ENCODE measurements at regions of chr22 and their contacts with region 1.

Region 1: DNA sequence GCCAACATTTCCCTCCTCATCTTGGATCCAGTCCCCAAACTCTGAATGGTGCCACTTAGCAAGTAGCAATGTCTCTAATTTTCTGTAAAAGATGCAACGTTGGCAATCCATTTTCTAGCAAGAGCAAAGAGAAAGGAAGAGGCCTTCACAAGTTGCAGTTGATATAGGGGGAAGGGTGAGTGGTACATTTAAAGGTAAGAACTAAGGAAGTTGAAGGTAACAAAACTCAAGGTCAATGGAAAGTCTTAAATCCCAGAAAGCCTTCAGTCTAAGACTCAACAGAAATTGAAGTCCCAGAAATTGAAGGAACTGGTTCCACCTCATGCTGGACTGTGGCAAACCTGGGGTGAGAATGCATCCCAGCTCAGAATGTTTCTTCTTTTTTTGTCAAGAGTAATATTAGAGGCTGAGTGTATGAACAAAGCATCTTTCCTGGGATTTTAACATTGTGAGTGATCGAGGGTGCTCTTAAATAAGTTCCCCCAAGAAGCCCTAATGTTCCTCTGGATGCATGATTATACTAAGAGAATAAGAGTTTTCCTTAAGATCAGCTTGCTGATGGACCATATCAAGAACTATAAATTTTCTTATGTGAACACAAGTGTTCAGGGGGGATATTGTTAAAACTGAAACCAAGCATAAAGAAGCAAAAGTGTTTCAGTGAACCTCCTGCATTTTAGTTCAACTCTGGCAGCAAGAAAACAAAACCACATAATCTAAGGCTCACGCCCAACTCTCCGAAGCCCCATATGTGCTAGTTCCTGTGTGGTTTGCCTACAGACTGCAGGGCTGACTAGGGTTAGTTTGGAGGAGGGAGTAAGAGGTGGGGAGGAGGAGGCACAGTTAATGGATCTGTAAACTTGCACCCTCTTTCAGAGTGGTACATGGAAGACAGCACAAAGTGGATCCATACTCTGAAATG is at the start of gene GRAP2:
- DNase-seq: peak in 8 of 9 donors; percentile 52 to 90 (median 86)
- ATAC-seq: peak; percentile 98
- H3K4me3 ChIP-seq: peak within 1 kb of the TSS; percentile 71
- H3K4me3 Mint-ChIP-seq: peak within 1 kb of the TSS in 9 of 10 donors; percentile 95 to 99 (median 97)
- H3K27ac ChIP-seq: peak within 1 kb of the TSS; percentile 83
- H3K27ac Mint-ChIP-seq: peak within 1 kb of the TSS in 6 of 9 donors; percentile 86 to 99 (median 96)
- H3K4me1 ChIP-seq: peaks cover 23 to 27% of the 10 kb centered on the region in 2 donors
- H3K4me1 Mint-ChIP-seq: peaks cover 13 to 31% (median 22%) of the 10 kb centered on the region in 7 donors
- H3K27me3 ChIP-seq: no peaks in the 10 kb centered on the region
- H3K27me3 Mint-ChIP-seq: no peaks in the 10 kb centered on the region
- total RNA-seq, gene GRAP2: 108 to 156 (median 145) TPM

Region 2: DNA sequence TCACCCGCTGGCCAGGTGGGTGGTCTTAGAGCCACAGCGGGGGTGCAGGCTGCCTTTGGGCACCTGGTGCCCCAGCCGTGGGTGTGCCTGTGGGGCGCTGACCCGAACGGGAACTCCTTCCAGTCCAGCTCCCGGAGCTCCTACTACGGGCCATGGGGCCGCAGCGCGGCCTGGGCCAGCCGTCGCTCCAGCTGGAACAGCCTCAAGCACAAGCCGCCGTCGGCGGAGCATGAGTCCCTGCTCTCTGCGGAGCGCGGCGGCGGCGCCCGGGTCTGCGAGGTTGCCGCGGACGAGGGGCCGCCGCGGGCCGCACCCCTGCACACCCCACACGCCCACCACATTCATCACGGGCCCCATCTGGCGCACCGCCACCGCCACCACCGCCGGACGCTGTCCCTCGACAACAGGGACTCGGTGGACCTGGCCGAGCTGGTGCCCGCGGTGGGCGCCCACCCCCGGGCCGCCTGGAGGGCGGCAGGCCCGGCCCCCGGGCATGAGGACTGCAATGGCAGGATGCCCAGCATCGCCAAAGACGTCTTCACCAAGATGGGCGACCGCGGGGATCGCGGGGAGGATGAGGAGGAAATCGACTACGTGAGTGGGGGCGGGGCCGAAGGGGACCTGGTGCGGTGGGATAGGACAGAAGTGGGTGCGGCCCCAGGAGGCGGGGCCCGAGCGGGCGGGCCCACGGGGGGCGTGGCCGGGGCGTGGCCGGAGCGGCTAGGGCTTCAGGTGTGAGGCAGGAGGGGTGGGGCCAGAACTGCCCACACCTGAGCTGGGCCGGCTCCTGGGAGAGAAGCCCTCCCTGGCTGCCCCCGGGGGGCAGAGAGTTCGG is 238.5 kb before region 1 on chr22:
- CTCF ChIA-PET with region 1: no interaction called
- POLR2A ChIA-PET with region 1: no interaction called
- intact Hi-C with region 1: loop called in 1 of 2 experiments (anchors 2 kb)
- DNase-seq: peak; percentile 75 to 91 (median 88)
- ATAC-seq: peak; percentile 93
- H3K4me3 ChIP-seq: peak overlapping the region; percentile 73
- H3K4me3 Mint-ChIP-seq: peak overlapping the region; percentile 75 to 92 (median 86)
- H3K27ac ChIP-seq: peak overlapping the region; percentile 74
- H3K27ac Mint-ChIP-seq: peak overlapping the region in 7 of 9 donors; percentile 76 to 97 (median 91)
- H3K4me1 ChIP-seq: peaks cover 15 to 58% of the 10 kb centered on the region in 2 donors
- H3K4me1 Mint-ChIP-seq: peaks cover 31 to 77% (median 64%) of the 10 kb centered on the region in 7 donors
- H3K27me3 ChIP-seq: no peaks in the 10 kb centered on the region
- H3K27me3 Mint-ChIP-seq: peaks cover 0 to 25% (median 4%) of the 10 kb centered on the region in 5 donors

Region 3: DNA sequence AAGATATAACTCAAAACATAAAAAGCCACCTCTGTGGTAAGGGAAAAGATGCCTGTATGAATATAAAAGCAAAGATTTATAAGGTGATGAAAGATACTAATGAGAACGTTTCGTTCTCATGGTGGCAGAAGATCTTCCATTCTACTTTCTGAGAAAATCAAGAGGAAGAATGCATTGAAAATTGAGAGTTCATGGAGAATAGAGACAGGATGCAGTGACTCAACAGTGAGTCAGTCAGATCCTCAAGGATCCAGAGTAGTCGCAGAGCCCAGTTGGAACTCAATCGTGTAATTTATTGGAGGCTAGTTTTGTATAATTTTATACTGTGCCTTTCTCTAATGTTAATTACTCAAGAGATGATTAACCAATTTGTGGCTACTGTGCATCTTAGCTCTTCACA is 80.3 kb before region 1 on chr22:
- CTCF ChIA-PET with region 1: no interaction called
- POLR2A ChIA-PET with region 1: no interaction called
- intact Hi-C with region 1: no loop called
- DNase-seq: no peak
- ATAC-seq: no peak
- H3K4me3 ChIP-seq: no peak overlapping the region
- H3K4me3 Mint-ChIP-seq: no peak overlapping the region
- H3K27ac ChIP-seq: no peak overlapping the region
- H3K27ac Mint-ChIP-seq: no peak overlapping the region
- H3K4me1 ChIP-seq: no peaks in the 10 kb centered on the region
- H3K4me1 Mint-ChIP-seq: peaks cover 0 to 8% (median 0%) of the 10 kb centered on the region in 7 donors
- H3K27me3 ChIP-seq: peaks cover 0 to 4% of the 10 kb centered on the region in 2 donors
- H3K27me3 Mint-ChIP-seq: peaks cover 0 to 42% (median 0%) of the 10 kb centered on the region in 5 donors

Region 4: DNA sequence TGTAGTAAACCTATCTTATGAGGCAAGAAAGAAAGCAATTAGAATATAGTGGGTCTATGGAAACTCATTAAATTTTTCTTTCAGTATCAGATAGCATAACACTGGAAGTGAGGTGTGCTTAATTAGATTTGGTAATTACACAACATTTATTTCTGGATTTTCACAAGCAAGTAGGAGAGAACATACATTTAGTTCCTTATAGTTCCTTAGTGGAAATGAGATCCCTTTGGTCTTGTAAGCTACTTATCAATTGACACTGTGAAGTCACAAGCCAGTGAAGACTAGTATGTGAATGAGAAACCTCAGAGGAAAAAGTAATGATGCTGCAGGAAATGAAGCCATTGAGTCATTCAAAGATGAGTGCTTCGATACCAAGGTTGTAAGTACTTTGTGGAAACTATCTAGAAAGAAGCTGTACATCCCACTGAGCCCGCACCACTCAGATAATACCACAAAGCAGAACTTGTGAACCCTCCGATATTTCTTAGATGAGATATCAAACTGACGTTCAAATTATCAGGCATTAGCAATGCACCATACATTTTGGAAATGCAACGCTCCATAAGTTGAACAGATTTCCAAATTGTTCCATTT is 60.6 kb before region 1 on chr22:
- CTCF ChIA-PET with region 1: no interaction called
- POLR2A ChIA-PET with region 1: interaction called, 8 read pairs
- intact Hi-C with region 1: loop called in 1 of 2 experiments (anchors 5 kb)
- DNase-seq: peak in 5 of 9 donors; percentile 9 to 31 (median 12)
- ATAC-seq: peak; percentile 72
- H3K4me3 ChIP-seq: no peak overlapping the region
- H3K4me3 Mint-ChIP-seq: peak overlapping the region in 4 of 10 donors; percentile 1 to 18 (median 7)
- H3K27ac ChIP-seq: no peak overlapping the region
- H3K27ac Mint-ChIP-seq: no peak overlapping the region
- H3K4me1 ChIP-seq: peaks cover 5 to 6% of the 10 kb centered on the region in 2 donors
- H3K4me1 Mint-ChIP-seq: peaks cover 14 to 29% (median 17%) of the 10 kb centered on the region in 7 donors
- H3K27me3 ChIP-seq: no peaks in the 10 kb centered on the region
- H3K27me3 Mint-ChIP-seq: peaks cover 0 to 18% (median 0%) of the 10 kb centered on the region in 5 donors

Region 5: DNA sequence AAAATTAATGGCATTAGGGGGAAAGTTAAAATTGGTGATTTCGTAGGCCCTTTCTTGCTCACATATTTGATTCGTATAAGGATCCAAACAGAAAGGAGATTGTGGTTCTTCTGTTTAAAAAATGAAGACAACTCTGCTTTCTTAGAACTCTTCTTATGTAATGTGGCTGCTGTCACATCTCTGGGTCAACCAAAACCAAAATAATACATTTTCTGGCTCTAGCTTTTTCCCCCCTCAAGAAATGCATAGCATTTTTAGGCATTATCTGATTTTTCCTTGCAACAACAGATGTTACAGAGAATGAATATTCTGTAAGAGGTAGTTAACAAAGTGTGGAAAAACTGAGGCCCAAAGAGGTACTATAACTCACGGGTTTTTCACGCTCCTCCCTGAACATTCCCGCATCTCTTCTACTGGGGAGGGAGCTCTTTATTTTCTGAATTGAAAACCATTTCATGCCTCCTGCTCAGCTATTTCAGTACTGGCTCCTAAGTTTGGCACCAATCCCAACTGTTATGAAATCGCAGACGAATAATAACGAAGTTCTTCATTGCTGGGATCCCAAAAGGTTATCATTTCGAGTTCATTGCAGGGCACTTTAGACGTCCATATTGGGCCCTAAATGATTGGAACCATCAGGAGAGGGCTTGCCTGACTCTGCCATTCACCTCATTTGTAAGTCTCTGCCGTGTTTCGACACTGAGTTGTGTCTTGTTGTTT is 17.4 kb after region 1 on chr22:
- CTCF ChIA-PET with region 1: interaction called, 7 read pairs
- POLR2A ChIA-PET with region 1: interaction called, 350 read pairs
- intact Hi-C with region 1: loop called (anchors 1 to 2 kb)
- DNase-seq: peak in 1 of 9 donors; percentile 11
- ATAC-seq: no peak
- H3K4me3 ChIP-seq: peak overlapping the region; percentile 34
- H3K4me3 Mint-ChIP-seq: peak overlapping the region in 9 of 10 donors; percentile 71 to 97 (median 79)
- H3K27ac ChIP-seq: peak overlapping the region; percentile 78
- H3K27ac Mint-ChIP-seq: peak overlapping the region in 6 of 9 donors; percentile 82 to 98 (median 95)
- H3K4me1 ChIP-seq: peaks cover 82 to 91% of the 10 kb centered on the region in 2 donors
- H3K4me1 Mint-ChIP-seq: peaks cover 67 to 99% (median 94%) of the 10 kb centered on the region in 7 donors
- H3K27me3 ChIP-seq: no peaks in the 10 kb centered on the region
- H3K27me3 Mint-ChIP-seq: no peaks in the 10 kb centered on the region

Region 6: DNA sequence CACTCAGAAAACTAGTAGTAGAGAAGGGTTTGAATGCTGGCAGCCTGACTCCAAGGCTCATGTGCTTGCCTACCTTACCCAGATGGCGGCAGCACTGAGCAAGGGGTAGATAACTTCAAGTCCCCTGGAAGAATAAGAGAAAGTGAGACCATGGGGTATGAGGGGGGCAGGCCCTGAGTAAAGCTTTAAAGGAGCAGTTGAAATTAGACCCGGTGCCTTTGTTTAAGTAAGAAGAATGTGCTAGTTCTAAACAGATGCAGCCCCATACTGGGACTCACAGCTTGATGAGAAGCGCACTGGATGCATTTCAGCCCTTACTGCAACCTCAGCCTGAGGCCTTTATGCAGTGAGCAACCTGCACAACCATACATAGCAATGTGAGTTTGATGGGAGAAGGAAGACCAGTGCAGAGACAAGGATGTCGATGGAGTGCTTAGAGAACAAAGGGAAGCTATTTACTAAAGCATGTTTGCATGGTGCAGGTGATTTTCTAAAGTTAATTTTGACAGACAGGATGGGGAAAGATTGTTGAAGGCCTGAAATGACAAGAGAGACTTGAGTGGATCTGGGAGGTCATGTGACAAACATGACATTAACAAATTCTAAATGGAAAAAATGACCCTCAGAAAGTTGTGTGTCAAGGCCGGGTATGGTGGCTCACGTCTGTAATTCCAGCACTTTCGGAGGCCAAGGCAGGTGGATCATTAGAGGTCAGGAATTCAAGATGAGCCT is 32.5 kb after region 1 on chr22:
- CTCF ChIA-PET with region 1: interaction called, 8 read pairs
- POLR2A ChIA-PET with region 1: interaction called, 350 read pairs
- intact Hi-C with region 1: loop called (anchors 1 to 5 kb)
- DNase-seq: peak in 5 of 9 donors; percentile 40 to 56 (median 52)
- ATAC-seq: peak; percentile 71
- H3K4me3 ChIP-seq: peak overlapping the region; percentile 22
- H3K4me3 Mint-ChIP-seq: peak overlapping the region; percentile 53 to 98 (median 80)
- H3K27ac ChIP-seq: peak overlapping the region; percentile 79
- H3K27ac Mint-ChIP-seq: peak overlapping the region in 6 of 9 donors; percentile 81 to 99 (median 97)
- H3K4me1 ChIP-seq: peaks cover 95 to 96% of the 10 kb centered on the region in 2 donors
- H3K4me1 Mint-ChIP-seq: peaks cover 50 to 55% (median 55%) of the 10 kb centered on the region in 7 donors
- H3K27me3 ChIP-seq: no peaks in the 10 kb centered on the region
- H3K27me3 Mint-ChIP-seq: no peaks in the 10 kb centered on the region